Activated naive CD4-positive, alpha-beta T cell treated with anti-CD3 and anti-CD28 coated beads for 36 hours (primary cell): ENCODE measurements at regions of chr7 and their contacts with region 1.

Region 1: DNA sequence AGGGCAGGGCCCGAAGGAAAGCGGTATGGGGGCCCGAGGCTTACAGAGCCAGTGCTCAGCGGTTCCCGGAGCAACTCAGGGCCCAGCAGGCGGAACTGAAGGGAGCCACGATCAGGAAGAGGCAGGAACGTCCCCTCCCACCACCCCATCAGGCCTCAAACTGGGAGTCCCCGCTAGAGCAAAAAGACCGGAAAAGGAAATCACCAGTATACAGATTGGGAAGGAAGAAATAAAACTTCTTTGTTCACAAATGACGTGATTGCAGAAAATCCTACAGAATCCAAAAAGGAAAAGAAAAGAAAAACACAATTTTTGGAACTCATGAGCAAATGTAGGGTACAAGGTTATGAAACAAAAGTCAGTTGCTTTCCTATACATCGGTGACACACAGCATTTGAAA is 21.6 kb upstream of the ZFAND2A start:
- DNase-seq: no peak
- H3K4me3 Mint-ChIP-seq: no peak overlapping the region
- H3K27ac Mint-ChIP-seq: no peak overlapping the region
- H3K4me1 Mint-ChIP-seq: peaks cover 6% of the 10 kb centered on the region
- H3K27me3 Mint-ChIP-seq: peaks cover 16% of the 10 kb centered on the region

Region 2: DNA sequence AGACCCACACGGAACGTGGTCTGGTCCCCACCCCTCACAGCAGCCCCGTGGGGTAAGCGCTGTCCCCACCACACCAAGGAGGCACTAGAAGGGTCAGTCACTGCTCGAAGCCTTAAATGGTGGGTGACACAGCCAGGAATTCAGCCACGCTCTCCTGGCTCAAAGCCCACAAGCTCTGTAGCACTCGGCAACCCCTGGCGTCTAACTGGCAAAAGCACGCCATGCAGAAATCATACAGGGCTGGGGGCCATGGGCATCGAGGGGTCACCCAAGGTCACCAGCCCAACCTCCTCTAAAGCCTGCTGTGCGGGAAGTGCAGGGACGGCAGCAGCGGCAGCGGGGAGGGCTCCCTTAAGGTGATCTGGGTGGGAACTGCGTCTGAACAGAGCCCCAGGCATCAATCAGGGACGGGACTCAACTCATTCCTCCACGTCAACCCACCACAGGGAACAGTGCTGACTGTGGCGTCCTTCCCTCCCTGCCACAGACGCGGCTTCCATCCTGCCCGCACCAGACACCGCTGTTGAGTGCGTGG is 86.0 kb before region 1 on chr7:
- CTCF ChIA-PET with region 1: no interaction called
- intact Hi-C with region 1: no loop called
- DNase-seq: no peak
- H3K4me3 Mint-ChIP-seq: no peak overlapping the region
- H3K27ac Mint-ChIP-seq: no peak overlapping the region
- H3K4me1 Mint-ChIP-seq: no peaks in the 10 kb centered on the region
- H3K27me3 Mint-ChIP-seq: no peaks in the 10 kb centered on the region

Region 3: DNA sequence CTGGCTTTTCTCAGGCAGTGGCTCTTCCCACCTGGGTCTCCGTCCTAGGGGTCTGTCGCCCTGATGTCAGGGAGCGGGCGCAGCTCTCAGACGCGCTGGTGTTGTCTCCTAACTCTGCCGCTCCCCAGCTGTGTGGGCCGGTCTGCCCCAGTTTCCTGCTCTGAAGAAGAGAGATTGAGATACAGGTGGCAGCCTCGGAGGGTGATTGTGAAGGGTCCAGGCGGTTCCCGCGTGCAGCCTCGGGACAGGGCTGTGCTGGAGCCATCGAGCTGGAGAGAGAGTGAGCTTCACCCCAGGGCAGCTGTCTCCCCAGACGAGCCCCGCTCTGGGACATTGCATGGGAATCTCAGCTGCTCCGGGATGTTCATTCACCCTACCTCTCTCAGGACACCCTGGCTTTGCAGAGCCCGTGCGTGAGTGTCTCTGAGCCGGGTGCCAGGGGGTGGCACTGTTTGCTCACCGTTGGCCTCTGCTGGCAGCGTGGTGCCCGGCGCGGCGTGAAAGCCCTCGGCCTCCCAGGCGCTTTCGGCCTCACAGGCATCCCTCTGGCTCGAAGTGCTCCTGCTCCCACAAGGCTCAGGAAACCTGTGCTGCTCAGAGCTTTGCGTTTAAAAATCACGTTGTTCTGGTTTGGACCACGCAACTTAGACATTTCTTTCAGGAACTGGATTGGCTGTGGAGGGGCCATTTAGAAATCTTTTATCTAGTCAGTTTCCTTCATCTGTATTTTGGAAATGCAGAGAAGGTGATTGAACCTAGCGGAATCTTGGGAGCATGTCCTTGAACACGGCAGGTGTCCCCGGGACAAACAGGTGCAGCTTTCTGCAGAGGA is 12.2 kb after region 1 on chr7:
- CTCF ChIA-PET with region 1: interaction called, 12 read pairs
- intact Hi-C with region 1: no loop called
- DNase-seq: peak; percentile 51
- H3K4me3 Mint-ChIP-seq: no peak overlapping the region
- H3K27ac Mint-ChIP-seq: no peak overlapping the region
- H3K4me1 Mint-ChIP-seq: peaks cover 12% of the 10 kb centered on the region
- H3K27me3 Mint-ChIP-seq: peaks cover 17% of the 10 kb centered on the region

Region 4: GRCh38 chr7:1412322-1413261 is 231.0 kb after region 1 on chr7:
- CTCF ChIA-PET with region 1: no interaction called
- intact Hi-C with region 1: no loop called
- DNase-seq: peak; percentile 90
- H3K4me3 Mint-ChIP-seq: peak overlapping the region; percentile 16
- H3K27ac Mint-ChIP-seq: no peak overlapping the region
- H3K4me1 Mint-ChIP-seq: peaks cover 11% of the 10 kb centered on the region
- H3K27me3 Mint-ChIP-seq: peaks cover 2% of the 10 kb centered on the region

Region 5: GRCh38 chr7:1569833-1570633 is 388.4 kb after region 1 on chr7 and contains the start of gene PSMG3:
- CTCF ChIA-PET with region 1: no interaction called
- intact Hi-C with region 1: no loop called
- DNase-seq: peak; percentile 91
- H3K4me3 Mint-ChIP-seq: peak within 1 kb of the TSS; percentile 87
- H3K27ac Mint-ChIP-seq: peak within 1 kb of the TSS; percentile 87
- H3K4me1 Mint-ChIP-seq: peaks cover 37% of the 10 kb centered on the region
- H3K27me3 Mint-ChIP-seq: no peaks in the 10 kb centered on the region
- total RNA-seq, gene PSMG3: 29.8 to 33.9 TPM